Activated B cell treated with CpG ODN at 0.5 μM for 24 hours (primary cell): ENCODE measurements at regions of chr2 and their contacts with region 1.

Region 1: GRCh38 chr2:47708801-47709499 is 74.0 kb upstream of the MSH6 start:
- DNase-seq: no peak
- ATAC-seq: peak; percentile 92
- H3K4me3 Mint-ChIP-seq: peak overlapping the region; percentile 41
- H3K27ac Mint-ChIP-seq: peak overlapping the region; percentile 91
- H3K4me1 Mint-ChIP-seq: peaks cover 26% of the 10 kb centered on the region
- H3K27me3 Mint-ChIP-seq: no peaks in the 10 kb centered on the region
- CTCF ChIP-seq: no peak

Region 2: GRCh38 chr2:47165001-47165555 is 543.9 kb before region 1 on chr2:
- CTCF ChIA-PET with region 1: no interaction called
- POLR2A ChIA-PET with region 1: no interaction called
- intact Hi-C with region 1: no loop called
- DNase-seq: no peak
- ATAC-seq: no peak
- H3K4me3 Mint-ChIP-seq: no peak overlapping the region
- H3K27ac Mint-ChIP-seq: peak overlapping the region; percentile 1
- H3K4me1 Mint-ChIP-seq: peaks cover 33% of the 10 kb centered on the region
- H3K27me3 Mint-ChIP-seq: no peaks in the 10 kb centered on the region
- CTCF ChIP-seq: no peak

Region 3: GRCh38 chr2:47653902-47654789 is 54.8 kb before region 1 on chr2:
- CTCF ChIA-PET with region 1: no interaction called
- POLR2A ChIA-PET with region 1: interaction called, 14 read pairs
- intact Hi-C with region 1: no loop called
- DNase-seq: no peak
- ATAC-seq: no peak
- H3K4me3 Mint-ChIP-seq: peak overlapping the region; percentile 51
- H3K27ac Mint-ChIP-seq: peak overlapping the region; percentile 90
- H3K4me1 Mint-ChIP-seq: peaks cover 51% of the 10 kb centered on the region
- H3K27me3 Mint-ChIP-seq: no peaks in the 10 kb centered on the region
- CTCF ChIP-seq: no peak

Region 4: GRCh38 chr2:47697000-47697601 is 11.8 kb before region 1 on chr2:
- CTCF ChIA-PET with region 1: no interaction called
- POLR2A ChIA-PET with region 1: interaction called, 16 read pairs
- intact Hi-C with region 1: loop called (anchors 1 kb)
- DNase-seq: no peak
- ATAC-seq: peak; percentile 51
- H3K4me3 Mint-ChIP-seq: peak overlapping the region; percentile 67
- H3K27ac Mint-ChIP-seq: peak overlapping the region; percentile 87
- H3K4me1 Mint-ChIP-seq: peaks cover 67% of the 10 kb centered on the region
- H3K27me3 Mint-ChIP-seq: peaks cover 2% of the 10 kb centered on the region
- CTCF ChIP-seq: no peak

Region 5: GRCh38 chr2:47719099-47719498 is 10.1 kb after region 1 on chr2:
- CTCF ChIA-PET with region 1: interaction called, 3 read pairs
- POLR2A ChIA-PET with region 1: interaction called, 46 read pairs
- intact Hi-C with region 1: loop called (anchors 1 kb)
- DNase-seq: no peak
- ATAC-seq: peak; percentile 49
- H3K4me3 Mint-ChIP-seq: peak overlapping the region; percentile 25
- H3K27ac Mint-ChIP-seq: no peak overlapping the region
- H3K4me1 Mint-ChIP-seq: peaks cover 55% of the 10 kb centered on the region
- H3K27me3 Mint-ChIP-seq: no peaks in the 10 kb centered on the region
- CTCF ChIP-seq: no peak

Region 6: GRCh38 chr2:47741094-47741493 is 32.1 kb after region 1 on chr2:
- CTCF ChIA-PET with region 1: no interaction called
- POLR2A ChIA-PET with region 1: no interaction called
- intact Hi-C with region 1: no loop called
- DNase-seq: no peak
- ATAC-seq: no peak
- H3K4me3 Mint-ChIP-seq: no peak overlapping the region
- H3K27ac Mint-ChIP-seq: no peak overlapping the region
- H3K4me1 Mint-ChIP-seq: peaks cover 16% of the 10 kb centered on the region
- H3K27me3 Mint-ChIP-seq: no peaks in the 10 kb centered on the region
- CTCF ChIP-seq: no peak

Region 7: DNA sequence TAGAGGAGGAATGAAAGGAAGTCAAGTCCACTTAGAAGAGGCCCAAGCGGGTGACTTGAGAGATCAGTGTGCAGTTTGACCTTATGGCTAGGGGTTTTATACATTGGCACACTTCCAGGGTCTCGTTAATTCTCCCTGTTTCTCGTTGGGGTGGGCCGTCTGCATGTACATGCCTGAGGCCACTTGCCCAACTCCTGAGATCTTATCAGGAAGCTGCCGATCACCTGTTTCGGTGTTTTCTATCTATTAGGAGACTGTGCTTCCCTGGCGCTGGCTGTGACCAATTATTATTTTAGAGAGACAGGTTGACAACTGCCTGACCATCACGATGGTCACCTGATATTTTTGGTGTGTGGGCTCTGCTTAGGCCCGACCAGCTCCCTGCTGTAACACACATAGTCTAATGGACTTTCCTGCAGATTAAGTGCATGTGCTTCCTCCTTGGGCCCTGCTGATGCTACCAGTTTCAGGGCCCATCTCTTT is 43.0 kb after region 1 on chr2:
- CTCF ChIA-PET with region 1: no interaction called
- POLR2A ChIA-PET with region 1: interaction called, 11 read pairs
- intact Hi-C with region 1: no loop called
- DNase-seq: no peak
- ATAC-seq: no peak
- H3K4me3 Mint-ChIP-seq: no peak overlapping the region
- H3K27ac Mint-ChIP-seq: peak overlapping the region; percentile 81
- H3K4me1 Mint-ChIP-seq: peaks cover 34% of the 10 kb centered on the region
- H3K27me3 Mint-ChIP-seq: no peaks in the 10 kb centered on the region
- CTCF ChIP-seq: no peak

Region 8: GRCh38 chr2:47833516-47833968 is 124.6 kb after region 1 on chr2:
- CTCF ChIA-PET with region 1: no interaction called
- POLR2A ChIA-PET with region 1: no interaction called
- intact Hi-C with region 1: no loop called
- DNase-seq: no peak
- ATAC-seq: peak; percentile 18
- H3K4me3 Mint-ChIP-seq: no peak overlapping the region
- H3K27ac Mint-ChIP-seq: no peak overlapping the region
- H3K4me1 Mint-ChIP-seq: no peaks in the 10 kb centered on the region
- H3K27me3 Mint-ChIP-seq: no peaks in the 10 kb centered on the region
- CTCF ChIP-seq: no peak

Region 9: DNA sequence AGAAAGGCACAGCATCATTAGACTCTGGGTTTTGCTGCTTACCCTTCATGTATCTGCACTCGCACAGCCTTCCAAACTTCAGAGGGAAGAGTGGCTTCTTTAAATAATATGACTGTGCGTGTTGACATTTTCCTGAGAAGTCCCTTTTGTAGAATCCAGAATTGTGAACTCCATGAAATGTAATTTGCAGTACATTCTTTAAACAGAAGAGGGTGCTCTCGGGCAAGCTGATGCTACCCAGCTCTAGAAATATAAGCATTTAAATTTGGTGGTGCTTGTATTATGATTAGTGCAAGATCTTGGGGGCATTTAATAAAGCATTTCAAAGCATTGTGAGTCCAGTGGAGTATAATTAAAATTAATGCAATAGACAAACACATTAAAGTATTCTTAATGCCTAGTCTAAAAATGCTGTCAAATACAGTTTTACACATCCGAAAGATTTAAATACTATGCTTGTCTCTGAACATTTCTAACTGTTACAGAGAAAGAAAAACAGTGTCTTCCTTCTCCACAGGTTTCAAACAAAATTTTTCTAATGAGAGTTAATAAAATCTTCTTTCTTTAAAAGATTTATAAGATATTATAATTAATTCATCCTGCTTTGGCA is 891.4 kb after region 1 on chr2:
- CTCF ChIA-PET with region 1: no interaction called
- POLR2A ChIA-PET with region 1: no interaction called
- intact Hi-C with region 1: no loop called
- DNase-seq: no peak
- ATAC-seq: no peak
- H3K4me3 Mint-ChIP-seq: no peak overlapping the region
- H3K27ac Mint-ChIP-seq: no peak overlapping the region
- H3K4me1 Mint-ChIP-seq: no peaks in the 10 kb centered on the region
- H3K27me3 Mint-ChIP-seq: peaks cover 8% of the 10 kb centered on the region
- CTCF ChIP-seq: peak; percentile 46